Activated T-helper 1 cell treated with anti-CD3 and anti-CD28 coated beads, Interleukin-12 subunit alpha, Interleukin-12 subunit beta, Interleukin-2, Interleukin-4 antibody, amounts not matched to agents 30 ng/mL and 10 ng/mL and 1 ng/mL, durations not matched to agents 14 hours and 24 hours and 36 hours (primary cell): ENCODE measurements at regions of chr2 and their contacts with region 1.

Region 1: DNA sequence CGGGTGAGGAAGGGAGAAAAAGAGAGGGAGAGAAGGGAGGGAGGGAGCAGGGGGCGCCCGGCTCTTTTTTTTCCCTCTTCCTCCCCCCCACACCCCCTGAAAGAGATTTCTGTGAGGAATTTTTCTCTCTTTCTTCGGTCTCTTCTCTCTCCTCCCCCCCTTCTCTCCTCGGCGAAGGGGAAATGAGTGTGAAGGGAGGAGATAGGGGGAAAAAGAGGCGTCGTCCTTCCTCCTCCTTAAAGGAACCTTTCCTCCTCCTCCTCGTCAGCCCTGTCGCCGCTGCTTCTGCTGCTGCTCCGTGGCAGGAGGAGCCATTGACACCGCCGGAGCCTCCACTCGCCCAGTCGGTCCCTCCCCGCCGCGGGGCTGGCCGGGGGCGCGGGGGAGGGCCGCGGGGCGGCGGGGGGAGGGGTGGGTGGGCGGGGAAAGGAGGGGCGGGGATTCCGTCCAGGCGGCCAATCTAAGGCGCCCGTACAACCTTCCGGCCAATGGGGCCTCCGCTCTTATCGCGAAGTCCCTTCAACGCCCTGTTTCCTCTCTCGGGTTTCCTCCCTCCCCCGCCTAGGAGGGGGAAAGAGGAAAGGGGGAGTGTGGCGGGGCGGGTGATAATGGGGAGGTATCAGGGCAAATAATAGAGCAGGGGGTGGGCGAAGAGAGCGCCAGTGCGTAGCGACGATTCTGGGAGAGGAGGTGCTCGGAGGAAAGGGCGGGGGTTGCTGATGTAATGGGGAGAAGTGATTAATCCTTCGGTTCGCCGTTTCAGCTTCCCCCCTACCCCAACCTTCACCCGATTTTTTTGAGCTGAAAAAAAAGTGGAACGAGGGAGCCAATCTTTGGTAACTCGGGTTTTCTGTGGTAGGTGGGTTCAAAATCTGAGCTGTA is at the start of gene FBXO11:
- DNase-seq: peak; percentile 94
- H3K4me3 Mint-ChIP-seq: peak within 1 kb of the TSS; percentile 88
- H3K27ac Mint-ChIP-seq: peak within 1 kb of the TSS; percentile 93
- H3K4me1 Mint-ChIP-seq: peaks cover 40% of the 10 kb centered on the region
- H3K27me3 Mint-ChIP-seq: no peaks in the 10 kb centered on the region
- total RNA-seq, gene FBXO11: 50.1 and 56.1 TPM in 2 replicates

Region 2: DNA sequence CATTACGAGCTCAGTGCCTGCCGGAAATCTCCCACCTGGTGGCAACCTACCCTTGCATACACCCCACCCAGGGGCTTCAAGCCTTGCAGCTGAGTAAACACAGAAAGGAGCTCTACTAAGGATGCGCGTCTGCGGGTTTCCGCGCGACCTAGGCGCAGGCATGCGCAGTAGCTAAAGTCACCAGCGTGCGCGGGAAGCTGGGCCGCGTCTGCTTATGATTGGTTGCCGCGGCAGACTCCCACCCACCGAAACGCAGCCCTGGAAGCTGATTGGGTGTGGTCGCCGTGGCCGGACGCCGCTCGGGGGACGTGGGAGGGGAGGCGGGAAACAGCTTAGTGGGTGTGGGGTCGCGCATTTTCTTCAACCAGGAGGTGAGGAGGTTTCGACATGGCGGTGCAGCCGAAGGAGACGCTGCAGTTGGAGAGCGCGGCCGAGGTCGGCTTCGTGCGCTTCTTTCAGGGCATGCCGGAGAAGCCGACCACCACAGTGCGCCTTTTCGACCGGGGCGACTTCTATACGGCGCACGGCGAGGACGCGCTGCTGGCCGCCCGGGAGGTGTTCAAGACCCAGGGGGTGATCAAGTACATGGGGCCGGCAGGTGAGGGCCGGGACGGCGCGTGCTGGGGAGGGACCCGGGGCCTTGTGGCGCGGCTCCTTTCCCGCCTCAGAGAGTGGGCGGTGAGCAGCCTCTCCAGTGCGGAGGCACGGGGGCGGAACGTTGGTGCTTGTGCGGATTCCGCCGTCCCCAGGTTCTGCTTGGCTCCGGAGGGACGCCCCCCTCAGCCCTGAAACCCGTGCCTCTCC is 503.4 kb before region 1 on chr2 and contains the start of gene MSH2:
- intact Hi-C with region 1: loop called (anchors 5 kb)
- DNase-seq: peak; percentile 91
- H3K4me3 Mint-ChIP-seq: peak within 1 kb of the TSS; percentile 97
- H3K27ac Mint-ChIP-seq: peak within 1 kb of the TSS; percentile 96
- H3K4me1 Mint-ChIP-seq: peaks cover 28% of the 10 kb centered on the region
- H3K27me3 Mint-ChIP-seq: no peaks in the 10 kb centered on the region
- total RNA-seq, gene MSH2: 73.3 TPM in 2 replicates

Region 3: GRCh38 chr2:47964774-47965434 is 58.5 kb after region 1 on chr2:
- intact Hi-C with region 1: no loop called
- DNase-seq: no peak
- H3K4me3 Mint-ChIP-seq: no peak overlapping the region
- H3K27ac Mint-ChIP-seq: no peak overlapping the region
- H3K4me1 Mint-ChIP-seq: no peaks in the 10 kb centered on the region
- H3K27me3 Mint-ChIP-seq: peaks cover 14% of the 10 kb centered on the region

Region 4: DNA sequence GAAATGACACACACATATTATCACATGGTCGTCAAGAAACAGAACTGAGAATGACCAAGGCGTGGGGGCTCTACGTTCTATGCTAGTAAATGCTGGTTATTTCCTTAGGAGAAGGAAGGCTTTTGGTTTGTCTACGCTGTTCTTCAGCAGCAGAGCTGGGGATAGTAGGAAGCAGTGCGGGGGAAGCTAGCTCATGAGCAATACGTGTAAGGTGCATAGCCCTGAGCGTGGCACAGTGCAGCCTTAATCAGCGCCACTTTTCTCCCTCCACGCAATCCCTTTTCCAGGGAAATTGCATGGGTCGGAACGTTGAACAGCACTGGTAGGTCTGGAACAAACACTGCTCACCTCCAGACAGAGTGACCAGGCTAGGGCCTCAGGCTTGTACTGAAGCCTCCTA is 199.4 kb after region 1 on chr2:
- intact Hi-C with region 1: loop called (anchors 1 kb)
- DNase-seq: no peak
- H3K4me3 Mint-ChIP-seq: no peak overlapping the region
- H3K27ac Mint-ChIP-seq: no peak overlapping the region
- H3K4me1 Mint-ChIP-seq: peaks cover 23% of the 10 kb centered on the region
- H3K27me3 Mint-ChIP-seq: peaks cover 7% of the 10 kb centered on the region

Region 5: GRCh38 chr2:48420512-48421197 is 514.3 kb after region 1 on chr2:
- intact Hi-C with region 1: loop called (anchors 1 kb)
- DNase-seq: peak; percentile 88
- H3K4me3 Mint-ChIP-seq: no peak overlapping the region
- H3K27ac Mint-ChIP-seq: peak overlapping the region; percentile 72
- H3K4me1 Mint-ChIP-seq: peaks cover 52% of the 10 kb centered on the region
- H3K27me3 Mint-ChIP-seq: peaks cover 2% of the 10 kb centered on the region